OCI-LY7 (cell line): ENCODE measurements at regions of chr2 and their contacts with region 1.

Region 1: DNA sequence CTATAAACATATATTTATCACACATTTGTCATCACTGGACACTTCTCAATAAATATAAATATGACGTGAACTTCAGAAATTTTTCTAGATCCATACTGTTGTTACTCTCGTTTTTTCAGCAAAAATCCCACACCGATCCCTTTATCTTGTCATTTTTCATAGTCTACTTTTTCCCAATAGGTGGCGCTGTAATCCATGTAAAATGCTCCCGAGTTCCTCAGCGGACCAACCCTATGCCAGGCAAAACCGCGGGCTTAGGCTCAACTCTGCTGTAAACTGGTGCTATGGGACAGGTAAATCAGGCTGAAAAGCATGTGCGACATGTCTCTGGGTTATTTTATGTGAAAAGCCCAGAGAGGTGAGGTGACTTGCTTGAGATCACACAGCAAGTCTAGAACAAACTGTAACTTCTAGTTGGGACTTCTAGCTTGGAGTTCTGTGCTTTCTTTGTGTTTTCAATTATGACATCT is 104.0 kb downstream of the COBLL1 start:
- DNase-seq: peak; percentile 73
- H3K4me3 ChIP-seq: no peak overlapping the region
- H3K27ac ChIP-seq: no peak overlapping the region
- H3K4me1 ChIP-seq: peaks cover 7% of the 10 kb centered on the region
- CTCF ChIP-seq: peak; percentile 94

Region 2: DNA sequence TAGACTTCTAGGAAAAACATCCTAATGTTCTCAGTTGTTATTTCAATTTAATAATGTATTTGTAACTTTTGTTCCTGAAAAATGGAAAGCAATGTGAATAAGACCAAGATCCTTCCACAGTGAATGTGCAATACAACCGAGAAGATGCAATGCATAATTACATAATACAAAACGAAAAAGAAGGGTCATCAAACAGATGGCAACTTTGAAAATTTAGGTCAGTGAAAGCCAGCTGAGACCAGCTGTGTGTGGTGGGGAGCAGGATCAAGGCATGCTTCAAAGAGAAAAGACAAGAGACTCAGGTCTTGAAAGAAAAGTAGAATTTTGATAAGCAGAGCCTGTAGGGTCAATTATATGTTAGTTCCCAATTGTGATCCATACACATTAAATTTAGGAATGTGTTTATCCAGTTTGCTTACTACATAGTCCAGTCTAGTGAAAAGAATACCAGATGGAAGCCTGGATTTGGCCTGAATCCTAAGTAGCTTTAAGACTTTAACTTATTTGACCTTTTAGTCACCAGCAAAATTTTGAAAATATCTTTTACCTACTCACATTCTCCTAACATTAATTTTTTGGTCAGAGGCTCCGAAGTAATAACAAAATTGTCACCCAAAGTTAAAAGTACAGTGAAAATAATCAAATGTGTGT is 10.3 kb after region 1 on chr2:
- CTCF ChIA-PET with region 1: no interaction called
- POLR2A ChIA-PET with region 1: no interaction called
- intact Hi-C with region 1: no loop called
- DNase-seq: no peak
- H3K4me3 ChIP-seq: no peak overlapping the region
- H3K27ac ChIP-seq: no peak overlapping the region
- H3K4me1 ChIP-seq: no peaks in the 10 kb centered on the region
- CTCF ChIP-seq: no peak

Region 3: DNA sequence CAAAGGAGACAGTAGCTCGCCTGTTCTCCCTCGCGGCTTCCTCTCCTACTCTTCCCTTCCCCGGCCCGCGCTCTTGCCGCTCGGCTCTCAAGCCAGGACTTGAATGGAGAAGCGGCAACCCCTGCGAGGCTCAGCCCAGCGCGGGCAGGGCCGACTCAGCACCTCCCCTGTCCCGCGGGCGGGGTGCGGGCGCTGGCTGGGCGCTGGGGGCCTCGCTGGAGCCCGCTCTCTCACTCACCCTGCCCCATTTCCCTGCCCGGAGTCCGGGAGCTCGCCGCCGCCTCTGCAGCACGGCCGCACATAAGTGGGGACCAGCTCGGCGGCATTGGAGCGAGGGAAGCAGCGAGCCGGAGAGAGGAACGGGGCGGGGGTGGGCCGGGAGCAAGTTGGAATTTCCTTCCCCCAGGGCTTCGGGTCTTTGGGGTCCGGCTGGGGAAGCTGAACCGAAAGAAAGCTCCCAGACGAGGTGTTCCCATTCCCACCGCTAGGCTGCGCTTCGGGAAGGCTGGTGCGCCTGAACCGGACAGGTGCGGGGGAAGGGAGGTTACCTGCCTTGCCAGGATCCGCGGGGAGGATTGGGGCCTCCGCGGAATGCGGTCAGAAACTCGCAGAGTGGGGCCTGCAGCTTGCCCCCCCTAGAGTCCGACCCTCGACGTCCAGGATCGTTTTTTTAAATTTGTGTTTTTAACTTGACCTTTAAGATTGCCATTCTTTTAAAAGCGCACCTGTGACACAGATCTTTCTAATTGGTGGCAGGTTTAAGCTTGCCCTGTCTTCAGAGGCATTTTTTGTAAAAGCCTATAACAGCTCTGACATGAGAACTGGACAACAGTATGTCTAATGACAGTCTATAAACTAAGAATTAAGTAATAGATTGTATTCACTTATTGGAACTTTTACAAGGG is 104.3 kb after region 1 on chr2 and contains the start of gene COBLL1:
- CTCF ChIA-PET with region 1: interaction called, 3 read pairs
- POLR2A ChIA-PET with region 1: no interaction called
- intact Hi-C with region 1: loop called (anchors 1 kb)
- DNase-seq: peak; percentile 29
- H3K4me3 ChIP-seq: peak within 1 kb of the TSS; percentile 65
- H3K27ac ChIP-seq: no peak within 1 kb of the TSS
- H3K4me1 ChIP-seq: peaks cover 3% of the 10 kb centered on the region
- CTCF ChIP-seq: peak; percentile 72
- total RNA-seq, gene COBLL1: 0.79 and 0.88 TPM in 2 replicates

Region 4: GRCh38 chr2:164910101-164910899 is 172.7 kb after region 1 on chr2:
- CTCF ChIA-PET with region 1: interaction called, 4 read pairs
- POLR2A ChIA-PET with region 1: interaction called, 3 read pairs
- intact Hi-C with region 1: loop called (anchors 1 kb)
- DNase-seq: peak; percentile 41
- H3K4me3 ChIP-seq: no peak overlapping the region
- H3K27ac ChIP-seq: no peak overlapping the region
- H3K4me1 ChIP-seq: peaks cover 4% of the 10 kb centered on the region
- CTCF ChIP-seq: no peak

Region 5: GRCh38 chr2:164917296-164917903 is 179.8 kb after region 1 on chr2:
- CTCF ChIA-PET with region 1: interaction called, 4 read pairs
- POLR2A ChIA-PET with region 1: interaction called, 5 read pairs
- intact Hi-C with region 1: loop called (anchors 1 kb)
- DNase-seq: peak; percentile 16
- H3K4me3 ChIP-seq: no peak overlapping the region
- H3K27ac ChIP-seq: no peak overlapping the region
- H3K4me1 ChIP-seq: no peaks in the 10 kb centered on the region
- CTCF ChIP-seq: peak; percentile 60

Region 6: DNA sequence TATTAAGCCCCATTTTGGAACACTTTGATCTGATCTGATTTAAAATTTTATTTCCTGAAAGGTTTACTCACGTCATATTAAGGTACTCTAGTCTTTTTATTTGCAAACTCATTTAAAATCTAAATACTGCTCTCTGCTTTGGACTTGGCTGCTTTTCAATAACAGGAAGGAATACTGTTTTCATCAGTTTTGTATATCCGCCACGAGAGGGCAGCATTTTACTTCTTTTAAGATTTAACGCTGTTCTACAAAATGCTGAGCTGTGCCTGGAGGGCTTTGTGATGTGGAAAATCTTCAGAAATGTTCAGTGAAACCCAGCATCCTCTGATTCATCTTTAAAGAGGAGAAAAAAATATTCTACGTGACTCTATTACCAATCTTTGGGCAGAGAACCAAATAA is 255.2 kb after region 1 on chr2:
- CTCF ChIA-PET with region 1: no interaction called
- POLR2A ChIA-PET with region 1: interaction called, 5 read pairs
- intact Hi-C with region 1: loop called (anchors 1 kb)
- DNase-seq: peak; percentile 81
- H3K4me3 ChIP-seq: no peak overlapping the region
- H3K27ac ChIP-seq: no peak overlapping the region
- H3K4me1 ChIP-seq: peaks cover 15% of the 10 kb centered on the region
- CTCF ChIP-seq: peak; percentile 79

Region 7: DNA sequence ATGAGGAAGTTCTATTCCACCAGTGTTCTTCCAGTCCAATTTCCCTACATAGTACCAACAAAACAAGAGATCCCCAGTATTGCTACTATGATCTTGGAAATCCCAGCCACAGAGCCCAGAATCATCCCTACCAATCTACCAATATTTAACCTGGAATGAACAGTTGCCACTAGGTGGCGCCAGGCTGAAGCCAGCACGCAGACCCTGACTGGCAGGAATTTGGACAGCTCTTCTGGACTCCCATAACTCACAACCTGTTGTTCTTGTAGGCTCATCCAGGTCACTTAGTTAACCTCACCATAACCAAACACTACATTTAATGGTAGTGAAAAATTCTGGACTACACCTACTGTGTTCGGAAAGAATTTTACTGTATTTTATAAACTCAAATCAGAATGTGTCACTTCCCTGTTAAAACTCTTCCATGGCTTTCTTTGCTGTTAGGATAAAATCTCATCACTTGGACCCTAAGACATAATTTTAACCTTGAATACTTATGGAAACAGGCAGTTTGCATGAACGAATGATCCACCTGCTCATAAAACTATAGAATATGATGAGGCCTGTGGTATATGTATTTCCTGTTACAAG is 277.5 kb after region 1 on chr2:
- CTCF ChIA-PET with region 1: interaction called, 3 read pairs
- POLR2A ChIA-PET with region 1: interaction called, 3 read pairs
- intact Hi-C with region 1: loop called (anchors 5 kb)
- DNase-seq: peak; percentile 72
- H3K4me3 ChIP-seq: no peak overlapping the region
- H3K27ac ChIP-seq: no peak overlapping the region
- H3K4me1 ChIP-seq: peaks cover 5% of the 10 kb centered on the region
- CTCF ChIP-seq: peak; percentile 98

Region 8: DNA sequence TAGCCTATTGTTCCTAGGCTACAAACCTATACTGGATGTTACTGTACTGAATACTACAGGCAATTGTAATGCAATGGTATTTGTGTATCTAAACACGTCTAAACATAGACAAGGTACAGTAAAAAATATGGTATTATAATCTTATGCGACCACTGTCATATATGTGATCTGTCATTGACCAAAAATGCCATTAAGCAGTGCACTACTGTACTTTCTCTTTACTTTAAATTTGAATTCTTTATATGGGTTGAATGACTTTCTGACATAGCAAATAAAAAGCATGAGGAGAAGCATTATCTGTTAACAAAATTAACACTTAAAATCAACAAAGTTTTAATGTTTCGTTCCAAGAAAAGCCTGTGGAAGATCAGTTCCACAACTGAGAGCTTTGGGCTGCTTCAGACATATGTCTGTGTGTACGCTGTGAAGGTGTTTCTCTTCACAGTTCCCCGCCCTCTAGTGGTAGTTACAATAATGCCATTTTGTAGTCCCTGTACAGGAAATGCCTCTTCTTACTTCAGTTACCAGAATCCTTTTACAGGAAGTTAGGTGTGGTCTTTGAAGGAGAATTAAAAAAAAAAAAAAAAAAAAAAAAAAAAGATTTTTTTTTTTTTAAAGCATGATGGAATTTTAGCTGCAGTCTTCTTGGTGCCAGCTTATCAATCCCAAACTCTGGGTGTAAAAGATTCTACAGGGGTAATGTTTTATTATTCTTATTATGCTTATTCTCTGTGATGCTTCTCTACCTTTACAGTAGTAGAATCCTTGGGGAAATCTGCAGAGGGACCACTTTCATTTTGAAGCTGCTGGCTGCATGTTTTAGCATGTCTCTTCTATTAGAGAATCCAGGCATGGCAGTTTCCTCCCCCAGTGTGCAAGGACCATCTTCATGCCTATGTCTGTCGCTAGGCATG is 556.0 kb after region 1 on chr2:
- CTCF ChIA-PET with region 1: no interaction called
- POLR2A ChIA-PET with region 1: no interaction called
- intact Hi-C with region 1: loop called (anchors 10 kb)
- DNase-seq: peak; percentile 88
- H3K4me3 ChIP-seq: no peak overlapping the region
- H3K27ac ChIP-seq: no peak overlapping the region
- H3K4me1 ChIP-seq: peaks cover 4% of the 10 kb centered on the region
- CTCF ChIP-seq: peak; percentile 83